Heart left ventricle (tissue), 16 donors: ENCODE measurements at regions of chr11 and their contacts with region 1.

Region 1: DNA sequence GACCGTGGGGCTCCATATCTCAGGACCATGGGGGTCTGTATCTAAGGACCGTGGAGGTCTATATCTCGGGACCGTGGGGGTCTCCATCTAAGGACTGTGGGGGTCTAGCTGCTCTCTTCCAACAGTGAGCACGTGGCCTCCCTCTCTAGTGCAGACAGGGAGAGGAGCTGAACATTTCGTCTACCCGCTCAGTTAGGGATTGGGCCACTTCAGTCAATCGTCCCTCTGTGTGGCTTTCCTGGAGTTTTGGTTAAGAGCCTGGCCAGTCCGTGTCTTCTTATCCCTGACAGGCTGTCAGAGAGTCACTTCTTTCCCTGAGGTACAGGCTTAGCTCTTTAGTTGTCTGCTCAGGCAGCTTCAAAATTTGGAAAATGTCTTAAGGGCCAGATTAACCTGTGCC is 3.1 kb downstream of the KRTAP5-1 start:
- DNase-seq: no peak
- ATAC-seq: no peak
- H3K4me3 ChIP-seq: no peak overlapping the region
- H3K27ac ChIP-seq: no peak overlapping the region
- H3K4me1 ChIP-seq: no peaks in the 10 kb centered on the region
- H3K27me3 ChIP-seq: no peaks in the 10 kb centered on the region
- CTCF ChIP-seq: no peak
- POLR2A ChIP-seq: no peak

Region 2: GRCh38 chr11:1067812-1068496 is 514.0 kb before region 1 on chr11:
- intact Hi-C with region 1: loop called in 1 of 10 experiments (anchors 5 kb)
- DNase-seq: no peak
- ATAC-seq: no peak
- H3K4me3 ChIP-seq: no peak overlapping the region
- H3K27ac ChIP-seq: no peak overlapping the region
- H3K4me1 ChIP-seq: peaks cover 0 to 17% (median 10%) of the 10 kb centered on the region in 12 donors
- H3K27me3 ChIP-seq: peaks cover 0 to 1% (median 0%) of the 10 kb centered on the region in 9 donors
- CTCF ChIP-seq: no peak
- POLR2A ChIP-seq: no peak

Region 3: GRCh38 chr11:1546077-1546535 is 35.9 kb before region 1 on chr11:
- intact Hi-C with region 1: no loop called
- DNase-seq: peak in 2 of 5 donors; percentile 33 to 60
- ATAC-seq: no peak
- H3K4me3 ChIP-seq: no peak overlapping the region
- H3K27ac ChIP-seq: no peak overlapping the region
- H3K4me1 ChIP-seq: peaks cover 5 to 32% (median 19%) of the 10 kb centered on the region in 12 donors
- H3K27me3 ChIP-seq: peaks cover 0 to 35% (median 9%) of the 10 kb centered on the region in 9 donors
- CTCF ChIP-seq: no peak
- POLR2A ChIP-seq: no peak